ENCODE measurements at regions of chr3 and their contacts with region 1.

Region 1: GRCh38 chr3:156513626-156514025 is 41.3 kb downstream of the SSR3 start:
- DNase-seq: no peak
- H3K4me3 ChIP-seq: no peak overlapping the region
- H3K27ac ChIP-seq: no peak overlapping the region
- H3K4me1 ChIP-seq: no peaks in the 10 kb centered on the region
- H3K27me3 ChIP-seq: no peaks in the 10 kb centered on the region
- CTCF ChIP-seq: no peak
- POLR2A ChIP-seq: no peak

Region 2: DNA sequence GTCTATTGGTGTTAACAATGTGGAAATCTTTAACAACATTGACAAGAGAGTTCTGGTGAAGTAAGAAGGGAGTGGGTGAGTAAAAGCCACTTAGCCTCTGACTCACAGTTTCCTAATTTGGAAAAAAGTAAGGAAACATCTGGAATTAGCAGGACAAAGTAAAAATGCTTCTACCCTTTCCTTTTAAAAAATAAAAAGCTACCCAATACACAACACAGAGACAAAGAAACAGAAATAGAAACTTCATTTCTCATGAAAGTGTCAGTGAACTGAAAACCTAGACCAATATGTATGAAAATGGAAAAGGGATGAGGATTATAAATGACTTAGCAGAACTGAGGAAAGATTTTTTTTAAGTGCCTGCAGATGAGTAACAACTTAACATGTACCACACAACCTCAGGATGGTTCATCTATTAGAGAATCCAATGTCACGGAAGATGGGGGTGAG is 24.1 kb before region 1 on chr3:
- intact Hi-C with region 1: no loop called
- DNase-seq: no peak
- H3K4me3 ChIP-seq: no peak overlapping the region
- H3K27ac ChIP-seq: no peak overlapping the region
- H3K4me1 ChIP-seq: no peaks in the 10 kb centered on the region
- H3K27me3 ChIP-seq: no peaks in the 10 kb centered on the region
- CTCF ChIP-seq: no peak
- POLR2A ChIP-seq: no peak

Region 3: DNA sequence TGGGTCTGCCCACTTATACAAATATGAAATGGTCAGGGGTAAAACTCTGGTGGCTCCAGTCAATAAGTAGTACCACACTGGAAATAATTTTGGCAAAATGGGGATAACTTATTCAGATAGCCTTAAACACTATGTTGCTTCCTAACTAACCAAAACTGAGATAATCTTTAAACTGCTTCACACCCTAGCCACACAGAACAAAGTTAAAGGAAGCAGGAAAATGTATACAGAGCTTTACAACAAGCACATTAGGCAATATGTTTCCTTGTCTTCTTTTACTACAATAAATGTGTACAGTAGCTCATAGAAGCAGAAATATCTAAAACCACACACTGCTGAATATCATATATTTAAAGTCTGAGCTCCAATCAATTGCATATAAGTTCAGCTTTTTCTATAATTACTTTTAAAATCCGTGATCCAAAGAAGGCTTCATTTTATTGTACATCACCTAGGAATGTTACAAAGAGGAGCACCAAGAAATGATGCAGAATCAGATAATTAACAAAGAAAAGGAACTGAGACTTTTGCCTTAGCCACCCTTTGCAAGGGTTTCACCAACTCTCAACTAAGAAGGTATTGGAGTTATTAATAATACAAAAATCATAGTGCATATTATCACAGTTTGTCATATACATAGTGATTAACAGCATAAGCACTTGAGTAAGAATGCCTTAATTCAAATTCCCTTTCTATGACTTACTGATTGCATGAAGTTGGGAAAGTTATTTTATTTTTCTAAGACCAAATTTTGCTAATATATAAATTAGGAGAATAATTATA is 50.5 kb after region 1 on chr3:
- intact Hi-C with region 1: loop called (anchors 2 kb)
- DNase-seq: no peak
- H3K4me3 ChIP-seq: no peak overlapping the region
- H3K27ac ChIP-seq: no peak overlapping the region
- H3K4me1 ChIP-seq: no peaks in the 10 kb centered on the region
- H3K27me3 ChIP-seq: no peaks in the 10 kb centered on the region
- CTCF ChIP-seq: no peak
- POLR2A ChIP-seq: no peak

Measured in breast epithelium (tissue), 4 donors.